PC-9 (cell line): ENCODE measurements at regions of chr2 and their contacts with region 1.

Region 1: DNA sequence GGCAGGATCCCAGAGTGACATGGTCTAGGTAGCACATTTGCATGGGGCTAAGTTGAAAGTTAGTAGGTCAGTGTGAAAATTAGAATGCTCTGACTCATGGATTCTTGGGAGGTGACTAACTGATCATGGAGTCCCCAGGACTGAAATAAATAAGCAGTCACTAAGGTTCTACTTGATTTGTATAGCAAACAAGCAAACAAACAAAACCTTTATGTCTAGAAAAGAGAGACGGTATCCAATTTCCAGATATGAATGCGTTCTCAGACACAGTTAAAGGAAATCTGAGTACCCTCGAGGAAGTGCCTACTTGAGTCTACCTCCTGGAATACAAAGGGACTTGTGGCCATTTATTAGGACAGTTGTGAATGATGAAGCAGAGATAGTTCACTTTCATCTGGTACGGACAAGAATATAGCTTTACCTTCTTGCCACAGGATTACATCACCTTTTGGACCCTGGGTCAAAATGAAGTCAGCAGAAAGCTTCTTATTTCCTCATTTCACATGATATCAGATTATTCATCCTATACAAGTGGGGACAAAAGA is 54.3 kb upstream of the AGPS start:
- DNase-seq: peak; percentile 57 to 100
- H3K4me3 ChIP-seq: peak overlapping the region; percentile 23; the same call in 1 of the 2 replicates
- H3K27ac ChIP-seq: peak overlapping the region; percentile 89
- H3K4me1 ChIP-seq: peaks cover 27% of the 10 kb centered on the region
- H3K27me3 ChIP-seq: no peaks in the 10 kb centered on the region
- CTCF ChIP-seq: 0 out of 2 replicates have a peak, but pooled peaks have one; percentile 18

Region 2: DNA sequence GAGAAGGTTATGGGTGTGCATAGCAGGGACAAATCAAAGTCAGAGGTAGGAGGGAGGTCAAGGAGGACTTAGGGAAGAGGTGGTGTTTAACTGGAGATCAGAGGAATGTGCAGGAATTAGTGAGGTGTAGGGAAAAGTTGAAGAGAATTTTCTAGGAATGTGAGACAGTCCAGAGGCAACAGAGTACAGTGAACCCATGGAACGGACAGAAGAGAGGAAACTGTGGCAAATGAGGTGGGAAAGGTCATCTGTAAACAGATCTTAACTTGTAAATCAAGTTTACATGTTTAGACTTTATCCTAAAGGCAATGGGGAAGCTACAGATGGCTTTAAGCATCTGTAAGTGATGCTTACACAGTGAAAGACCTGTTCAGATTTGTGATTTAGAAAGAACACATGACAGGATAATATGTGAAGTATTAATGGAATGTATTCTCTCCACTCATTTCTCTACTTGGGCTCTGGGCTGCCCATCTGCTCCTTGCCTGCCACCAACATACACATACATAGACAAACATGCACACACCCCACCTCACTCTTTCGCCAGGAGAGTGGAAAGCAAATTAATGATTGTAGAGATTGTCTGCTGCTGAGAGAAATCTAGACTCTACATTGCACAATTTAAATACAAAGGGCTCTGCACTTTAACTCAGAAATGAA is 12.8 kb before region 1 on chr2:
- CTCF ChIA-PET with region 1: no interaction called
- POLR2A ChIA-PET with region 1: no interaction called
- intact Hi-C with region 1: no loop called
- DNase-seq: peak in 1 of 2 experiments; percentile 12
- H3K4me3 ChIP-seq: no peak overlapping the region
- H3K27ac ChIP-seq: no peak overlapping the region
- H3K4me1 ChIP-seq: peaks cover 8% of the 10 kb centered on the region
- H3K27me3 ChIP-seq: no peaks in the 10 kb centered on the region
- CTCF ChIP-seq: no peak

Region 3: GRCh38 chr2:177392373-177393202 is 54.3 kb after region 1 on chr2 and contains the start of gene AGPS:
- CTCF ChIA-PET with region 1: interaction called, 6 read pairs
- POLR2A ChIA-PET with region 1: no interaction called
- intact Hi-C with region 1: loop called (anchors 1 kb)
- DNase-seq: peak; percentile 76 to 91
- H3K4me3 ChIP-seq: peak within 1 kb of the TSS; percentile 94
- H3K27ac ChIP-seq: peak within 1 kb of the TSS; percentile 62
- H3K4me1 ChIP-seq: peaks cover 54% of the 10 kb centered on the region
- H3K27me3 ChIP-seq: no peaks in the 10 kb centered on the region
- CTCF ChIP-seq: no peak
- total RNA-seq, gene AGPS: 101 and 107 TPM in 2 replicates

Region 4: GRCh38 chr2:177397481-177398289 is 59.4 kb after region 1 on chr2:
- CTCF ChIA-PET with region 1: interaction called, 6 read pairs
- POLR2A ChIA-PET with region 1: no interaction called
- intact Hi-C with region 1: loop called (anchors 1 kb)
- DNase-seq: peak; percentile 38 to 80
- H3K4me3 ChIP-seq: no peak overlapping the region
- H3K27ac ChIP-seq: peak overlapping the region; percentile 67
- H3K4me1 ChIP-seq: peaks cover 56% of the 10 kb centered on the region
- H3K27me3 ChIP-seq: no peaks in the 10 kb centered on the region
- CTCF ChIP-seq: no peak

Region 5: GRCh38 chr2:177552422-177553175 is 214.3 kb after region 1 on chr2:
- CTCF ChIA-PET with region 1: no interaction called
- POLR2A ChIA-PET with region 1: no interaction called
- intact Hi-C with region 1: loop called (anchors 2 kb)
- DNase-seq: peak; percentile 85 to 93
- H3K4me3 ChIP-seq: peak overlapping the region; percentile 79
- H3K27ac ChIP-seq: peak overlapping the region; percentile 61
- H3K4me1 ChIP-seq: peaks cover 4% of the 10 kb centered on the region; the same call in 1 of the 2 replicates
- H3K27me3 ChIP-seq: no peaks in the 10 kb centered on the region
- CTCF ChIP-seq: no peak